B cell (primary cell): ENCODE measurements at regions of chr13 and their contacts with region 1.

Region 1: DNA sequence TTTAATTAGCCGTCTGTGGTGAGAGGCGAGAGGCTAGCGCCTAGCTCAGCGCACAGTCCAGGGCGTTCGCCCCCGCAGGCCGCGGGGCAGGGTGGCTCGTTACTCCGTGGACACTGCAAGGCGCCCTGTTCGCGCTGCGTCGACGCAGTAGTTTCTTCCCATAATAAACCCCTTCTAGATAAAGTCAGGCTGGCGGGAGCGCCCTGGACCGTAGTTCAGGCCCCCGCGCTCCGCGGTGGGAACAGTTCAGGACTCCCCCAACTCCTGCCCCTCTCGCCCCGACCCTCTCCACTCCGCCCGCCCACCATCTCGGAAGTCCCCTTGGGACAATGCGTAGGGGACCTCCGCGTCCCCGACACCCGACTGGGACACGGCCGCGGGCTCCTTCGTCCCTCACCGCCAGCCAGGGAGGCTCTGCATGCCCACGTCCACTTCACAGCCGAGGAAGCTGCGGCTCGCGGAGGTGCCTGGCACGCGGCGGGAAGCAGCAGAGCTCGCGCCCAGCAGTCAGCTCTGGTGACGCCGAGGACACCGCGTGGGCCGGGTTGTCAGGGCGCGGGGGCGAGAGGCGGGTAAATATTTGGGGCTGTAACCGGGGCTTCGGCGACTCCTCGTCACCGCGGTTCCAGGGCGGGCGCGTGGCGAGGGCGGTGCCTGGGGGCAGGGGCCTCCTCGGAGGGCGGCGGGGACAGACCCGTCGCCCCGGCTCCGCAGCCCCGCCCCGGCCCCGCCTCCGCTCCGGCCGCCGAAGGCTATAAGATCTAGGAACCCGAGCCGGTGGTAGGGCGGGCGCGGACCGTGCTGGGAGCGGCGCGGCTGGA is at the start of gene RGCC:
- DNase-seq: peak; percentile 89
- ATAC-seq: peak; percentile 75
- H3K4me3 ChIP-seq: peak within 1 kb of the TSS; percentile 25 to 71 (median 60)
- H3K4me3 Mint-ChIP-seq: peak within 1 kb of the TSS; percentile 82
- H3K27ac ChIP-seq: peak within 1 kb of the TSS in 1 of 2 donors; percentile 49
- H3K27ac Mint-ChIP-seq: peak within 1 kb of the TSS; percentile 32
- H3K4me1 ChIP-seq: peaks cover 27% of the 10 kb centered on the region in 2 donors
- H3K4me1 Mint-ChIP-seq: peaks cover 28% of the 10 kb centered on the region
- H3K27me3 ChIP-seq: peaks cover 0 to 48% (median 15%) of the 10 kb centered on the region in 4 experiments
- H3K27me3 Mint-ChIP-seq: peaks cover 38% of the 10 kb centered on the region
- CTCF ChIP-seq: no peak
- total RNA-seq, gene RGCC: 6.5 and 8.0 TPM in 2 replicates

Region 2: GRCh38 chr13:41603917-41604316 is 146.9 kb after region 1 on chr13:
- CTCF ChIA-PET with region 1: no interaction called
- POLR2A ChIA-PET with region 1: no interaction called
- intact Hi-C with region 1: loop called (anchors 10 kb)
- DNase-seq: no peak
- ATAC-seq: no peak
- H3K4me3 ChIP-seq: no peak overlapping the region
- H3K4me3 Mint-ChIP-seq: no peak overlapping the region
- H3K27ac ChIP-seq: no peak overlapping the region
- H3K27ac Mint-ChIP-seq: no peak overlapping the region
- H3K4me1 ChIP-seq: no peaks in the 10 kb centered on the region
- H3K4me1 Mint-ChIP-seq: no peaks in the 10 kb centered on the region
- H3K27me3 ChIP-seq: no peaks in the 10 kb centered on the region
- H3K27me3 Mint-ChIP-seq: no peaks in the 10 kb centered on the region
- CTCF ChIP-seq: no peak

Region 3: DNA sequence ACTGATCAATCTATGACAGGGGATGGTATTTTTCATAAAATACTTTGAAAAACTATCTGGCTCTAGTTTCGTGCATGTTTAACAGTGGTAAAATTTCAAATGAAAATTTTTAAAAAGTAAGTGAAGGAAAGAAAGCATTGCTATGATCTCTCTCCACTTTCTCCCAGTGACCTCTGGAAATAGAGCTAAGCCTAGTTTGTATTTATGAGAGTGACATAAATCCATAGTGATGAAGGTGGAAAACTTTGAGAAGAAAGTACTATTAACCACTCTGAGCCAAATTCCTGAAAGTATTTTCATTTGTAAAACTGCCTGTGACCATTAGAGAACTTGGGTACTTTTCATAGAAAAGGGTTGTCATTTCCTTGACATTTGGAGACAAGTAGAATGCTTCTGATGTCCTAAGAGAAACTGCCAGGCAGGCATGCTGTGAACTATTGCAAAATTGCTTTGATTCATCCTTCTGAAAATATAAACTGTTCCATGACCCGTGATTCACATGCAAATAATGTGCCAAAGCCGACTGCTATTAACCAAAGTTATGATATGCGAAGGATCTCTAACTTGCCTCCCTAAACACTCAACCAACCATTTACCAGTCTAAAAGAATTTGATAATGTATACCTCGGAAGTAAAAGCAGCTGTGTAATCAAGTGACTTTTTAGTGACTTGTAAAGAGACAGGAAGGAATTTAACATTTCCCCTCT is 370.7 kb after region 1 on chr13:
- CTCF ChIA-PET with region 1: no interaction called
- POLR2A ChIA-PET with region 1: no interaction called
- intact Hi-C with region 1: no loop called
- DNase-seq: no peak
- ATAC-seq: no peak
- H3K4me3 ChIP-seq: no peak overlapping the region
- H3K4me3 Mint-ChIP-seq: no peak overlapping the region
- H3K27ac ChIP-seq: no peak overlapping the region
- H3K27ac Mint-ChIP-seq: no peak overlapping the region
- H3K4me1 ChIP-seq: no peaks in the 10 kb centered on the region
- H3K4me1 Mint-ChIP-seq: no peaks in the 10 kb centered on the region
- H3K27me3 ChIP-seq: no peaks in the 10 kb centered on the region
- H3K27me3 Mint-ChIP-seq: no peaks in the 10 kb centered on the region
- CTCF ChIP-seq: no peak

Region 4: GRCh38 chr13:42039946-42040729 is 583.2 kb after region 1 on chr13:
- CTCF ChIA-PET with region 1: no interaction called
- POLR2A ChIA-PET with region 1: no interaction called
- intact Hi-C with region 1: loop called (anchors 10 kb)
- DNase-seq: peak; percentile 82
- ATAC-seq: peak; percentile 83
- H3K4me3 ChIP-seq: peak overlapping the region; percentile 61 to 75 (median 66)
- H3K4me3 Mint-ChIP-seq: peak overlapping the region; percentile 93
- H3K27ac ChIP-seq: peak overlapping the region in 1 of 2 donors; percentile 45
- H3K27ac Mint-ChIP-seq: peak overlapping the region; percentile 81
- H3K4me1 ChIP-seq: peaks cover 11 to 19% of the 10 kb centered on the region in 2 donors
- H3K4me1 Mint-ChIP-seq: peaks cover 20% of the 10 kb centered on the region
- H3K27me3 ChIP-seq: peaks cover 0 to 23% (median 11%) of the 10 kb centered on the region in 4 experiments
- H3K27me3 Mint-ChIP-seq: peaks cover 12% of the 10 kb centered on the region
- CTCF ChIP-seq: no peak